H1 (cell line): ENCODE measurements at regions of chr5 and their contacts with region 1.

Region 1: DNA sequence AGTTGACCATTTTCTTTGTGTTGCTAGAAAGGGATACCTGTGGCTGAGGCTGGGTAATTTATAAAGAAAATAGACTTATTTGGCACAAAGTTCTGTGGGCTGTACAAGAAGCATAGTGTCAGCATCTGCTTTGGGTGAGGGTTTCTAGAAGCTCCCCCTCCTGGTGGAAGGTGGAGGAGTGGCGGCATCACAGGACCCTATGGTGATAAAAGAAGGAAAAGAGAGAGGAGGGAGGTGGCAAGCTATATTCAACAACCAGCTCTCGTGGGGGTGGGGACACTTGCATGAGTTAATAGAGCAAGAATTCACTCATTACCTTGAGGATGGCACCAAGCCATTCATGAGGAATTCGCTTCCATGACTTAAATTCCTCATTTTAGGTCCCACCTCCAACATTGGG is 2041.4 kb upstream of the CDH9 start:
- DNase-seq: peak; percentile 39 to 62
- H3K4me3 ChIP-seq: no peak overlapping the region
- H3K27ac ChIP-seq: no peak overlapping the region
- H3K4me1 ChIP-seq: no peaks in the 10 kb centered on the region
- H3K27me3 ChIP-seq: no peaks in the 10 kb centered on the region
- CTCF ChIP-seq: peak; percentile 37 to 61 (median 57)
- EP300 ChIP-seq: peak in 1 of 2 experiments; percentile 69; a peak in 1 of 3 replicates
- POLR2A ChIP-seq: no peak
- RAD21 ChIP-seq: peak; percentile 47 to 55; a peak in 3 of 4 replicates

Region 2: DNA sequence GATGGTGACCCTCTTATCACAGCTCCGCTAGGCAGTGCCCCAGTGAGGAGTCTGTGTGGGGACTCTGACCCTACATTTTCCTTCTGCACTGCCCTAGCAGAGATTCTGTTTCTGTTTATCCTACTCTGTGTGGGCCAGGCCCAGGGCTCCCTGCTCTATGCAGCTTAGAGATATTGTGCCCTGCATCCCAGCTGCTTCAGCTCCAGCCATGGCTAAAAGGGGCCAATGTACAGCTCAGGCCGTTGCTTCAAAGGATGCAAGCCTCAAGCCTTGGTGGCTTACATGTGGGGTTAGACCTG is 10.7 kb before region 1 on chr5:
- CTCF ChIA-PET with region 1: interaction called, 10 read pairs
- POLR2A ChIA-PET with region 1: no interaction called
- DNase-seq: no peak
- H3K4me3 ChIP-seq: no peak overlapping the region
- H3K27ac ChIP-seq: no peak overlapping the region
- H3K4me1 ChIP-seq: no peaks in the 10 kb centered on the region
- H3K27me3 ChIP-seq: no peaks in the 10 kb centered on the region
- CTCF ChIP-seq: no peak
- EP300 ChIP-seq: no peak
- POLR2A ChIP-seq: no peak
- RAD21 ChIP-seq: no peak